MCF 10A (cell line): ENCODE measurements at regions of chr12 and their contacts with region 1.

Region 1: DNA sequence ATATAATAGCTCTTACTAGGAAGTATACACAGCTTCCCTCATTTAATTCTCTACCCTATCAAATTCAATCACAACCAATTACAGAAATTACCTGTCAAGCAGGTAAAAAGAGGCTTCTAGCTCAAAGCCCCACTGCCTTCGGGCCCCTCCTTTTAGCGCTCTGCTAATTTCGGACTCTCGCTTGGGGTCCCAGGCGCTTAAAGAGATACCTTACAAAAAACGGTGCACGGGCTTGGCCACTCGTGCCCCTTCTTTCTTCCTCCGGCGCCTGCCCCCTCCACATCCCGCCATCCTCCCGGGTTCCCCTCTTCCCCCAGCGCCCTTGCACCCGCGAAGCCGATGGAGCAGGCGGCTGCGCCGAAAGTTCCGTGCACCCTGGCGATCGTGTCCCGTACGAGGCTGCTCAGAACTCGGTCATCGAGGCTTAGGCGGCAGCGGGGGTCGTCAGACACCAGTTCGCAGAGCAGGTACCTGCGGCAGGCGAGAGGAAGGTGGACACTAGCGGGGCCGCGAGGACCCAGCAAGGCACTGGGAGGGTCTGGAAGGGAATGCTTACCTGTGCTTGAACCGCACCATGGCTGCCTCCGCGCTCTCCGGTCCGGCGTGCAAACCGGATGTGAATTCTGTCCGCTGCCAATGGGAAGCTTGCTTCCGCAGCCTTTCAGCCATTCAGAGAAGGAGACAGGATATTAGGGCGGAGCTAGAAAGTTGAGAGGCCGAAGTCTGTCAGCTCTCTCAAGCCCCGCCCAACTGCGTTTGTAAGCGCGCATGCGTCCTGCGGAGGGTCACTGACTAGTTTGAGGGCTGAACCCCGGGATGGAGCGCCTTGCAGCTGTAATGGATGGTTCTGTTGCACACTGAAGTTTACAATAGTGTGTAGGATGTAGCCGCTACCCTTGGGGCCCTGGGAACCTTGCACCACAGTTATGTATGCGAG is at the start of gene POP5:
- DNase-seq: peak; percentile 98
- H3K4me3 Mint-ChIP-seq: peak within 1 kb of the TSS; percentile 99
- H3K27ac Mint-ChIP-seq: peak within 1 kb of the TSS; percentile 91
- H3K4me1 Mint-ChIP-seq: peaks cover 16% of the 10 kb centered on the region
- H3K27me3 Mint-ChIP-seq: no peaks in the 10 kb centered on the region
- CTCF ChIP-seq: no peak
- total RNA-seq, gene POP5: 24.3 and 29.9 TPM in 2 replicates

Region 2: GRCh38 chr12:120528861-120529525 is 52.1 kb before region 1 on chr12 and contains the start of gene COQ5:
- CTCF ChIA-PET with region 1: interaction called, 5 read pairs
- POLR2A ChIA-PET with region 1: interaction called, 14 read pairs
- intact Hi-C with region 1: loop called (anchors 1 kb)
- DNase-seq: peak; percentile 90
- H3K4me3 Mint-ChIP-seq: peak within 1 kb of the TSS; percentile 79
- H3K27ac Mint-ChIP-seq: peak within 1 kb of the TSS; percentile 96
- H3K4me1 Mint-ChIP-seq: peaks cover 6% of the 10 kb centered on the region
- H3K27me3 Mint-ChIP-seq: no peaks in the 10 kb centered on the region
- CTCF ChIP-seq: no peak
- total RNA-seq, gene COQ5: 21.5 and 22.9 TPM in 2 replicates

Region 3: GRCh38 chr12:120658286-120659150 is 77.5 kb after region 1 on chr12:
- CTCF ChIA-PET with region 1: interaction called, 15 read pairs
- POLR2A ChIA-PET with region 1: no interaction called
- intact Hi-C with region 1: no loop called
- DNase-seq: no peak
- H3K4me3 Mint-ChIP-seq: no peak overlapping the region
- H3K27ac Mint-ChIP-seq: no peak overlapping the region
- H3K4me1 Mint-ChIP-seq: no peaks in the 10 kb centered on the region
- H3K27me3 Mint-ChIP-seq: peaks cover 1% of the 10 kb centered on the region
- CTCF ChIP-seq: no peak

Region 4: GRCh38 chr12:120710031-120710804 is 129.2 kb after region 1 on chr12 and contains the start of gene UNC119B:
- CTCF ChIA-PET with region 1: interaction called, 9 read pairs
- POLR2A ChIA-PET with region 1: interaction called, 17 read pairs
- intact Hi-C with region 1: loop called (anchors 1 kb)
- DNase-seq: peak; percentile 49
- H3K4me3 Mint-ChIP-seq: peak within 1 kb of the TSS; percentile 89
- H3K27ac Mint-ChIP-seq: peak within 1 kb of the TSS; percentile 55
- H3K4me1 Mint-ChIP-seq: peaks cover 16% of the 10 kb centered on the region
- H3K27me3 Mint-ChIP-seq: no peaks in the 10 kb centered on the region
- CTCF ChIP-seq: no peak
- total RNA-seq, gene UNC119B: 31.0 and 34.7 TPM in 2 replicates

Region 5: GRCh38 chr12:121085069-121085468 is 504.0 kb after region 1 on chr12:
- CTCF ChIA-PET with region 1: no interaction called
- POLR2A ChIA-PET with region 1: no interaction called
- intact Hi-C with region 1: no loop called
- DNase-seq: no peak
- H3K4me3 Mint-ChIP-seq: no peak overlapping the region
- H3K27ac Mint-ChIP-seq: no peak overlapping the region
- H3K4me1 Mint-ChIP-seq: peaks cover 7% of the 10 kb centered on the region
- H3K27me3 Mint-ChIP-seq: no peaks in the 10 kb centered on the region
- CTCF ChIP-seq: no peak

Region 6: DNA sequence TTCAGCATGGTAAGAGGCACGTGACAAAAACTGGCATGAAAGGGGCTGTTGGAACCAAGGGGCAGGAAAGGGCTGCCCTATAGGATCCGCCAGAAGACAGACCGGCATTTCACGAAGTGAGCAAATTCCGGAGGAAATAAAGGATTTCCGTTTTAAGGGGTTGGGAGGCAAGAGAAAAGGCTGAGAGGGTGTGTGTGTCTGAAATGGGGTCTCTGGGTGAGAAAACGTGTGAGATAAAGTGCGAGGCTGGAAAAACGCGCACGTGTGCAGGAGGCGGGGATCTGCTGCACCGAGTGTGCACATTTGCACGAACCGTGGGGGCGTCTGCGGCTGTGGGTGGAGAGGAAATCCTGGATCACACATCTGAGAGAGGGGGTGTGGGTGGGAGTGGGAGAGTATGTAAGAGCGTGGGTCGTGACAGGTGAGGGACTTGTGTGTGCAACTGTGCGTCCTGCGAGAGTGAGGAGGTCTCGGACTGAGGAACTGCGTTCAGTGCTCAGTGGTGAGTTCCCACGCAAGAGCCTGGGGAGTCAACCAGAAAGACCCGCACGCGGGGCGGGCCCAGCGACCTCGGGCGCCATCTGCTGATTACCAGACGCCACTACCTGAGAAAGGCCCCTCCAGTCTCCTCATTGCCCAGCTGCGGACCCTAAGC is 514.6 kb after region 1 on chr12:
- CTCF ChIA-PET with region 1: interaction called, 8 read pairs
- POLR2A ChIA-PET with region 1: interaction called, 6 read pairs
- intact Hi-C with region 1: loop called (anchors 1 kb)
- DNase-seq: peak; percentile 57
- H3K4me3 Mint-ChIP-seq: peak overlapping the region; percentile 47
- H3K27ac Mint-ChIP-seq: no peak overlapping the region
- H3K4me1 Mint-ChIP-seq: peaks cover 9% of the 10 kb centered on the region
- H3K27me3 Mint-ChIP-seq: peaks cover 12% of the 10 kb centered on the region
- CTCF ChIP-seq: peak; percentile 90